Activated T-helper 1 cell treated with anti-CD3 and anti-CD28 coated beads, Interleukin-12 subunit alpha, Interleukin-12 subunit beta, Interleukin-2, Interleukin-4 antibody, amounts not matched to agents 30 ng/mL and 10 ng/mL and 1 ng/mL, durations not matched to agents 14 hours and 24 hours and 36 hours (primary cell): ENCODE measurements at regions of chr7 and their contacts with region 1.

Region 1: GRCh38 chr7:7968543-7969305 is at the start of gene GLCCI1:
- DNase-seq: peak; percentile 95
- H3K4me3 Mint-ChIP-seq: peak within 1 kb of the TSS; percentile 89
- H3K27ac Mint-ChIP-seq: peak within 1 kb of the TSS; percentile 91
- H3K4me1 Mint-ChIP-seq: peaks cover 20% of the 10 kb centered on the region
- H3K27me3 Mint-ChIP-seq: no peaks in the 10 kb centered on the region
- total RNA-seq, gene GLCCI1: 13.4 and 13.5 TPM in 2 replicates

Region 2: DNA sequence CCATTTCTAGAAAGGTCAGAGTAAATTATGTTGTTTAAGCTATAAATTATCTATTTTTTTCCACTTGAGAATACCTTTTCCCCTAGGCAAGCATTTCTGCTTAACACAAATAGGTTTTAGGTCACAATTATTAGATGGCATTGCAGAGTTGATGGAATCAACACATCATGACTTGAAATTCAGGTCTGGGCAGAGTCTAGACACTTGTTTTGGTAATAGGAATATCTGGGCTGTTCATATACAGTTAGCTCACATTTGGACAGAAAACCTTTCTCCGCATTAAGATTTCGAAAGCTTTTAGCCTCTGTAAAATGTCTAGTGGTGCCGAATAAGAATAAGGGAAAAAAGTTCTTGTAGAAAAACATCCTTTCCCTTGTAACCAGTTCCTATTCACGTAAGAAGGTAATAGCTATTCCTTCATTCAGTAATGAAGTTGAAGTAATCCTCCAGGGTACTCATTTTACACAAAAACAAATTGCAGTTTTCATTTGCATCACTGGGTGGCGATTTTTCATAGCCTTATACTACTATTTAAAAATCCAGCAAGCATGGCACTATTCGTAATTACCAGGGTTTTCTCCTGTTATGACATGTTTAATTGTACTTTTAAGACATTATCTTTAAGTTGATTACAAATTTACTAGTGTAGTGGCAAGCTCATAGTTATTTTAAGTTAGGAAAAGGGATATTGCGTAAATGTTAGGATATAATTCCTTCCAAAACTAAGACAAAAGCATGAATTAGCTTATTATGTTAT is 287.4 kb before region 1 on chr7:
- intact Hi-C with region 1: loop called (anchors 2 kb)
- DNase-seq: peak; percentile 12
- H3K4me3 Mint-ChIP-seq: no peak overlapping the region
- H3K27ac Mint-ChIP-seq: no peak overlapping the region
- H3K4me1 Mint-ChIP-seq: peaks cover 12% of the 10 kb centered on the region
- H3K27me3 Mint-ChIP-seq: no peaks in the 10 kb centered on the region

Region 3: GRCh38 chr7:7830122-7830878 is 138.4 kb before region 1 on chr7:
- intact Hi-C with region 1: loop called (anchors 1 kb)
- DNase-seq: no peak
- H3K4me3 Mint-ChIP-seq: no peak overlapping the region
- H3K27ac Mint-ChIP-seq: peak overlapping the region; percentile 61
- H3K4me1 Mint-ChIP-seq: peaks cover 7% of the 10 kb centered on the region
- H3K27me3 Mint-ChIP-seq: peaks cover 2% of the 10 kb centered on the region

Region 4: GRCh38 chr7:7989133-7989984 is 20.6 kb after region 1 on chr7:
- intact Hi-C with region 1: loop called (anchors 1 kb)
- DNase-seq: no peak
- H3K4me3 Mint-ChIP-seq: peak overlapping the region; percentile 77
- H3K27ac Mint-ChIP-seq: peak overlapping the region; percentile 41
- H3K4me1 Mint-ChIP-seq: peaks cover 28% of the 10 kb centered on the region
- H3K27me3 Mint-ChIP-seq: no peaks in the 10 kb centered on the region

Region 5: DNA sequence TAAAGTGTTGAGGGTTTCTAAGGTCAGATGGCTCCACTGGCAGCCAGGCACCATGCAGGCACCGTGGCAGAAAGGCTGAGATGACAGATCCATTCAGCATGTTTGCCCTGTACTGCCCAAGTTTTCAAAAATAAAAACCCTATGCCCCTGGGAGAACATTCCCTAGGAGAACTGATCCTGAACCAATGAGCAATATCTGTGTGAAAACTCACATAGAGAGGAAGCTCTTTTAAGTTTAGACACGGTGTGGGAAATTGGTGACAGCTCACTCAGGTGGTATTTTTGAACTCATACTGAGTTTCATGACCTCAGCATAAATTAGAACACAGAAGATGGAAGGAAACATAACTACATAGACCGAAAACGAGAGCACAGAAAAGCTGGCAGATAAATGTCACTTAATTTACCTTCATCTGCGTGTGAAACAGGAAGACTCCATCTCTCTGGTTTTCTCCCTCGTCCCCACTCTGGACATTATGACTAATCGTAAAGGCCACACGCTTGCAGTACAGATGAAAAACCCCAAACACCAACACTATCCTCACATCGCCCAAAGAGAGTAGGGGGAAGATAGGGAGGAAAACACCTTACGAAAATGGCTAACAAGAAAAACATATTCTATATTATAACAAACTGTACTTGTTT is 165.5 kb after region 1 on chr7:
- intact Hi-C with region 1: loop called (anchors 1 kb)
- DNase-seq: peak; percentile 46
- H3K4me3 Mint-ChIP-seq: peak overlapping the region; percentile 10
- H3K27ac Mint-ChIP-seq: peak overlapping the region; percentile 70
- H3K4me1 Mint-ChIP-seq: peaks cover 63% of the 10 kb centered on the region
- H3K27me3 Mint-ChIP-seq: no peaks in the 10 kb centered on the region

Region 6: DNA sequence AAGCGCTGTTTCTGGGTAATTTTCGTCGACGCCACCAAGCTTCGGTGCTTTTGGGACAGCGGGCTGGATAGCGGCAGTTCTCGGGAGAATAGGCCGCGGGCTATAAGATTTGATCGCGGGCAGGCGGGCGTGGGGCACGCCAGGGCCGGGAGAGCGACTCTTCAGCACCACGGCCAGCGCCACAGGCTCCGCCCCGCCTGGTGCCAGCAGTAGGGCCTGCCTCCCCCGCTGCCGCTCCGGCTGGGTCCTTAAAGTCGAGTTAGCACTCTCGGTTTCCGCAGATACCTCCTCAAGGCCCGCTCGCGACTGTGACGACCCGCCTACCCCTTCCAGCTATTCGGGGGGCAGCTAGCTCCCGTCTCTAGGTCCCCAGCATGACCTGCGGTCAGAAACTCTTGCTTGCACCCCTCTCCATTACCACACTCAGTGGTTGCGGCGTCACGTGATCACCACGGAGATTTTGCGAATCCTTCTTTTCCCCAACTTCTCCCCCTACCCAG is 474.1 kb after region 1 on chr7:
- intact Hi-C with region 1: no loop called
- DNase-seq: peak; percentile 50
- H3K4me3 Mint-ChIP-seq: no peak overlapping the region
- H3K27ac Mint-ChIP-seq: peak overlapping the region; percentile 40
- H3K4me1 Mint-ChIP-seq: peaks cover 5% of the 10 kb centered on the region
- H3K27me3 Mint-ChIP-seq: peaks cover 43% of the 10 kb centered on the region